Endothelial cell of umbilical vein (primary cell): ENCODE measurements at regions of chr9 and their contacts with region 1.

Region 1: GRCh38 chr9:22228542-22228941 is 218.1 kb upstream of the DMRTA1 start:
- DNase-seq: peak; percentile 31
- H3K4me3 ChIP-seq: no peak overlapping the region
- H3K27ac ChIP-seq: no peak overlapping the region
- H3K4me1 ChIP-seq: no peaks in the 10 kb centered on the region
- H3K27me3 ChIP-seq: no peaks in the 10 kb centered on the region
- CTCF ChIP-seq: peak; percentile 5 to 15
- POLR2A ChIP-seq: no peak

Region 2: DNA sequence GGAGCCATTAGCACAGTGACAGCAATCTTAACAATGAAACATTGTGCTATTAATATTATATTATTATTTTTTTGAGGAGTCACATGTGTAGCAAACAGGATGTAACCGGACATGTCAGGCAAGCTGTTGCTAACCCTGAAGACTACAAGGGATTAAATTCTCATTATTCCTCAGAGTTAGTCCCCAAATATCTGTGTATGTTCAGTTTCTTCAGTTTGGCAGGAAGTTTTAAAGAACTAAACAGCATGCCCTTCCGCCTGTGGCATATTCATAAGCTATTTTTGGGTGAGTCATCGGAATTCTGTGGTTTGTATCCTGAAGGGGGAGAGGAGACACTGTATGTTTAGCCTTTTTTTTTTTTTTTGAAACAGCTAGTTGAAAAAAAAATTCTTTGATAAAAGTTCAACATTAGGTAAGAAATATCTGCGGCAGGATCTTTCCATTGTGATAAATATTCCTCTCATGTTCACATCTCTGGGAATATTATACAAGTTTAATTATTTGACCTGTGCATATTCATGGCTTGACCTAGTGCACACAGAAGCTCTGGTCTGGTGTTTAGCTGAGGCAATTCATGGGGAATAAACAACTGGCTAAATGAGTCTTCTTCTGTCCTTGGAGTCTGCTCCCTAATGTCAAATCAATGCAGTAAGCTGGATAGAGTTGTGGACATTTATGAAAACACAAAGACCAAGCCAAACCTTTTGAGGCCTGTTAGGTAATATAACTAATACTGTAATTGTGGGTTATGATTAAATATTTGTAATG is 16.8 kb before region 1 on chr9:
- CTCF ChIA-PET with region 1: interaction called, 20 read pairs
- POLR2A ChIA-PET with region 1: no interaction called
- dilution Hi-C with region 1: no loop called
- intact Hi-C with region 1: no loop called
- DNase-seq: peak; percentile 92
- H3K4me3 ChIP-seq: no peak overlapping the region
- H3K27ac ChIP-seq: peak overlapping the region; percentile 21
- H3K4me1 ChIP-seq: peaks cover 30% of the 10 kb centered on the region
- H3K27me3 ChIP-seq: no peaks in the 10 kb centered on the region
- CTCF ChIP-seq: no peak
- POLR2A ChIP-seq: no peak